ENCODE measurements at regions of chr17 and their contacts with region 1.

Region 1: DNA sequence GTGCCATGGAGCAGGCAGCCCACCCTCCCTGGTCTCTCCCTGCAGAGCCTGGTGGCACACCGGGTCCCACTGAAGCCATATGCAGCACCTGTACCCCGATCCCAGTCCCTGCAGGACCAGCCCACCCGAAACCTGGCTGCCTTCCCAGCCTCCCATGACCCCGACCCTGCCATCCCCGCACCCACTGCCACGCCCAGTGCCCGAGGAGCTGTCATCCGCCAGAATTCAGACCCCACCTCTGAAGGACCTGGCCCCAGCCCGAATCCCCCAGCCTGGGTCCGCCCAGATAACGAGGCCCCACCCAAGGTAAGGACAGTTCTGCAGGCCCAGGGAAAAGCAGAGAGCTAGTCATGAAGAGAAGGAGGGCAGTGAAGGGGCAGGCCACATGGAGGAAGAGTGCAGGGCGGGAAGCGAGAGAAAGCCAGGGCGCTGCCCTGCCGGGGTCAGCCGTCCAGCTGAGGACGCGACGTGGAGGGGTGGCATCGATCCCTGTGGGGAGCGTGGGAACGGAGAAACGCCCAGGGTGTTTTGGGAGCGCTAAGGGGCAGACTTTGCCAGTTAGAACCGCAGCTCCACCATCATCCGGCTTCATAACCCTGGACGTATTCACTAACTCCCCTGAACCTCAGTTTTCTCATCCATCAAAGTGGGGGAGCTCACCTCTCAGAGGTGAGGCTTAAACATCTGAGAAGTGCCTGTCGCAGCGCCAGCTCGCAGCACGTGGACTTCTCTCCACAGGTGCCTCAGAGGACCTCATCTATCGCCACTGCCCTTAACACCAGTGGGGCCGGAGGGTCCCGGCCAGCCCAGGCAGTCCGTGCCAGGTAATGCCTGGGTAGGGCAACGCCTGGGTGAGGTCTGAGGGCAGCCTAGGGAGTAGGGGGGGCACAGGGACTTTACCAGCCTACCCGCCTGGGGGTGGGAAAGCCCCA is 7.7 kb upstream of the C17orf107 start:
- DNase-seq: no peak
- H3K4me3 ChIP-seq: no peak overlapping the region
- H3K27ac ChIP-seq: no peak overlapping the region
- H3K4me1 ChIP-seq: no peaks in the 10 kb centered on the region
- H3K27me3 ChIP-seq: no peaks in the 10 kb centered on the region
- CTCF ChIP-seq: no peak

Region 2: DNA sequence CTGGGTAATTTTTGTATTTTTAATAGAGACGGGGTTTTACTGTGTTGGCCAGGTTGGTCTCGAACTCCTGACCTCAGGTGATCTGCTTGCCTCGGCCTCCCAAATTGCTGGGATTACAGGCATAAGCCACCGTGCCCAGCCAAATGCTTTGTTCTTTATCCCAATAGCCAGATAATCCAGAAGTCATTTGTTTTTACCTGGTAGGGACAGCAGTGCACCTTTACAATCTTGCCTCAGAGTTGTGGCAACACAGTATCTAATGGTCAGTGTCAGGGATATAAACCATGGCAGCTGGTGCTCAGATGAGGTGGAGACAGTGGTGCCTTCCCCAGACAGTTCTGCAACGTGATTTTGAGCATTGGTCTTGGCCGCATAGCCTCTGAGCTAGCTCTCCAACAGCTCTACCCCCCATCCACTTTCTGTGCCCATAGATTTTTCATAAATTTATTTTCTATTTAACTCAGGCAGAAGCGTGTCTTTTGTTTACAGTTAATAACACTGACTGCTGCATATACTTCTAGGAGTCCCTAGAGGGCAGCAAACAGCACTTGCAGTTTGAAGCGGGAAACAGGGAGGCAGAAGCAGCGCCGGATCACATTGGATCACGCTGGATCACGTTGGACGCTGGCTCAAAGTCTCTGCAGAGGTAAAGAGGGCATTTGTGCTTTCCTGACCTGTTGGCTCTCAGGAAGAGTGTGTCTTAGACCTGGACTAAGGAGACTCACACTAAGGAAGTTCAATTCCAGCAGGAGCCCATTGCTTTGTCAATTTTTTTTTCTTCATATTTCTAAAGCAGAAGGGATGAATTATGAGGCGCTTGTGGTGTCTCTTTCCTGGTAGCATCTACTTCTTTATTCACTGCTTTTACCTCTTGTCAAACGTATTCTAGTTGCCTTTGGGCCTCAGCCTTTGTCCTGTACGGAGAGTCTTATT is 326.2 kb before region 1 on chr17:
- CTCF ChIA-PET with region 1: interaction called, 3 read pairs
- POLR2A ChIA-PET with region 1: no interaction called
- intact Hi-C with region 1: loop called (anchors 1 kb)
- DNase-seq: peak; percentile 88
- H3K4me3 ChIP-seq: no peak overlapping the region
- H3K27ac ChIP-seq: no peak overlapping the region
- H3K4me1 ChIP-seq: no peaks in the 10 kb centered on the region
- H3K27me3 ChIP-seq: no peaks in the 10 kb centered on the region
- CTCF ChIP-seq: peak; percentile 92

Region 3: DNA sequence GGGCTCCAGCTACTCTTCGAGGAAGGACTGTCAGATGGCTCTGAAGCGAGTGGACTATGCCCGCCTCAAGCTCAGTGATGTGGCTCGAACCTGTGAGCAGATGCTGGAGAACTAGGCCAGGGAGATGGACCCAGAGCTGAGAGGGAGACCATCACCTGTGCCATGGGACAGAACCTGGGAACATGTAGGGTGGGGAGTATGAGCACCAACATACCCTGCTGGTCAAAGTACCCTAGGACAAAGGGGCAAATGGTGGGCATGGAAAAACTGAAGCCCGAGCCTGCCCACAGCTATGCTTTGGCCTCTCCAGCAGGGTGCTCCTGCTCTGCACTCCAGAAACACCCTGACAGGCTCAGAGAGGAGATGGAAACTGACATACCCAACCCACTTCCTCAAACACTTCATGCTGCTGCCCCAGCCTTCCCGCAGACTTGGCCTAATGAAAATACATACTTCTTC is 158.6 kb before region 1 on chr17:
- CTCF ChIA-PET with region 1: no interaction called
- POLR2A ChIA-PET with region 1: no interaction called
- intact Hi-C with region 1: loop called (anchors 2 kb)
- DNase-seq: no peak
- H3K4me3 ChIP-seq: no peak overlapping the region
- H3K27ac ChIP-seq: no peak overlapping the region
- H3K4me1 ChIP-seq: no peaks in the 10 kb centered on the region
- H3K27me3 ChIP-seq: peaks cover 1% of the 10 kb centered on the region
- CTCF ChIP-seq: peak; percentile 20; the same call in 1 of the 2 replicates

Region 4: GRCh38 chr17:4786106-4786511 is 105.6 kb before region 1 on chr17 and contains the start of gene VMO1:
- CTCF ChIA-PET with region 1: no interaction called
- POLR2A ChIA-PET with region 1: no interaction called
- intact Hi-C with region 1: loop called (anchors 2 kb)
- DNase-seq: peak; percentile 90
- H3K4me3 ChIP-seq: peak within 1 kb of the TSS; percentile 41
- H3K27ac ChIP-seq: peak within 1 kb of the TSS; percentile 86
- H3K4me1 ChIP-seq: peaks cover 36% of the 10 kb centered on the region
- H3K27me3 ChIP-seq: no peaks in the 10 kb centered on the region
- CTCF ChIP-seq: no peak
- total RNA-seq, gene VMO1: 28.6 and 39.7 TPM in 2 replicates

Region 5: DNA sequence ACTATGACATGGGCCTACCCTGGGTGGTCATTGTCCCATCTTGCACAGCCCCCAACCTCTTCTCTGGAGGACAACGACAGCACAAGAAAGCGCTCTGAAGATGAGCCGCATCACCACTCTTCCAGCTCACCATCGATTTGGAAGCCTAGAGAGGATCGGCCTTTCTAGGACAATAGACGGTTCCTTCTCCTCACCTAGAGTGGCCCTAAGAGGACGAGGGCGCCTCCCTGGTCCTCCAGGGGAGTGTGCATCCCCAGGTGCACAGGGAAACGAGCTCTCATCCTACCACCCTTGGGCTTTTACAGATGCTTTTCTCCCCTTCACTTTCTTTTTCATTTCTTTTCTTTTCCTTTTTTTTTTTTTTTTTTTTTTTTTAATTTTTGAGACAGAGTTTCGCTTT is 163.9 kb after region 1 on chr17:
- CTCF ChIA-PET with region 1: no interaction called
- POLR2A ChIA-PET with region 1: no interaction called
- intact Hi-C with region 1: no loop called
- DNase-seq: no peak
- H3K4me3 ChIP-seq: no peak overlapping the region
- H3K27ac ChIP-seq: no peak overlapping the region
- H3K4me1 ChIP-seq: no peaks in the 10 kb centered on the region
- H3K27me3 ChIP-seq: no peaks in the 10 kb centered on the region
- CTCF ChIP-seq: no peak